T-cell (primary cell): ENCODE measurements at regions of chr5 and their contacts with region 1.

Region 1: DNA sequence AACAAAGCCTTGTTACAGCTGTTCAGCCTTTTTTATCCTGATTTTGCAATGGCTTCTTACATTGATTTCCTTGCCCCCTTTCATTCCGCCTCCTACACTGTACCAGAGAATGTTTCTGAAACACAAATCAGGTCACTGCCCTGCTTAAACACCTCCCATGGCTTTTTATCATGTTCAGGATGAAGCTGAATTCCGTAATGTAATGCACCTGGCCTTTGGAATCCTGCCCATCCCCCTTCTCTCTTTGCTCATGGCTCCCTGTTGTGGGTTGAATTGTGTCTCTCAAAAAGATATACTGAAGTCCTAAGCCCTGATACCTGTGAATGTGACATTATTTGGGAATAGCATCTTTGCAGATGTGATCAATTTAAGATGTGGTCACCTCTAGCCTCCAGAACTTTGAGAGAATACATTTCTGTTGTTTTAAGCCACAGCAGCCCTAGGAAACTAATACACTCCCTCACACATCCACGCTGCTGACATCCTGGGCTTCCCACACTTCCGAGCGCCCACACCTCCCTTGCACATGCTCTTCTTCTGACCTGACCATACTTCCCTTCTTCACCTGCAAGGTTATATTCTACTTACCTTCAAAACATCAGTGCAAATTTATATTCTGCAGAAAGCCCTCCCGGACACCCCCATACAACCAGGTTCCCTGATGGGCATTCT is 101.2 kb downstream of the DNAH5 start:
- DNase-seq: no peak
- ATAC-seq: no peak
- H3K4me3 ChIP-seq: no peak overlapping the region
- H3K4me3 Mint-ChIP-seq: no peak overlapping the region
- H3K27ac ChIP-seq: no peak overlapping the region
- H3K27ac Mint-ChIP-seq: no peak overlapping the region
- H3K4me1 ChIP-seq: no peaks in the 10 kb centered on the region
- H3K4me1 Mint-ChIP-seq: no peaks in the 10 kb centered on the region
- H3K27me3 ChIP-seq: no peaks in the 10 kb centered on the region
- H3K27me3 Mint-ChIP-seq: no peaks in the 10 kb centered on the region

Region 2: DNA sequence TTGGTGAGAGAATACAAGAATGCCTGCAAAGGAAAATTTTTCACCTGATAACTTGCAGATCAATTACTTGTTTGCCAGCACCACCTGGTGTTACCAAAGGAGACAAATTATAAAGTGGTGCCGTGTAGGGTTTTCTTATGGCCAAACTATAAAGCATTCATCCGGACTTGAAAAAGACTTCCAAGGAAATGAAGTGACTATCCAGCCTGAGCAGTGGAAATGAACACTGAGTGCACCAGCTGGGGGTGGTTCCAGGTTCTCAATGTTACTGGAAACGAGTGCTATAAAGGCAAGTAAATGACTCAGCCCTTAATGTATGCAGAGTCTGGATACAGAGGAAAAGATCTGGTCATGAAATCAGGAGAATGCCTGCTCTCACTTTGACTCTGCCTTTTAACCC is 12.0 kb before region 1 on chr5:
- CTCF ChIA-PET with region 1: no interaction called
- POLR2A ChIA-PET with region 1: no interaction called
- DNase-seq: no peak
- ATAC-seq: no peak
- H3K4me3 ChIP-seq: no peak overlapping the region
- H3K4me3 Mint-ChIP-seq: no peak overlapping the region
- H3K27ac ChIP-seq: no peak overlapping the region
- H3K27ac Mint-ChIP-seq: no peak overlapping the region
- H3K4me1 ChIP-seq: no peaks in the 10 kb centered on the region
- H3K4me1 Mint-ChIP-seq: no peaks in the 10 kb centered on the region
- H3K27me3 ChIP-seq: no peaks in the 10 kb centered on the region
- H3K27me3 Mint-ChIP-seq: no peaks in the 10 kb centered on the region

Region 3: GRCh38 chr5:13866792-13867191 is 23.5 kb after region 1 on chr5:
- CTCF ChIA-PET with region 1: no interaction called
- POLR2A ChIA-PET with region 1: no interaction called
- DNase-seq: no peak
- ATAC-seq: no peak
- H3K4me3 ChIP-seq: no peak overlapping the region
- H3K4me3 Mint-ChIP-seq: no peak overlapping the region
- H3K27ac ChIP-seq: no peak overlapping the region
- H3K27ac Mint-ChIP-seq: no peak overlapping the region
- H3K4me1 ChIP-seq: no peaks in the 10 kb centered on the region
- H3K4me1 Mint-ChIP-seq: no peaks in the 10 kb centered on the region
- H3K27me3 ChIP-seq: no peaks in the 10 kb centered on the region
- H3K27me3 Mint-ChIP-seq: no peaks in the 10 kb centered on the region

Region 4: GRCh38 chr5:13878357-13878756 is 35.0 kb after region 1 on chr5:
- CTCF ChIA-PET with region 1: interaction called in 1 of 2 experiments, 14 read pairs
- POLR2A ChIA-PET with region 1: no interaction called
- DNase-seq: no peak
- ATAC-seq: no peak
- H3K4me3 ChIP-seq: no peak overlapping the region
- H3K4me3 Mint-ChIP-seq: no peak overlapping the region
- H3K27ac ChIP-seq: no peak overlapping the region
- H3K27ac Mint-ChIP-seq: no peak overlapping the region
- H3K4me1 ChIP-seq: no peaks in the 10 kb centered on the region
- H3K4me1 Mint-ChIP-seq: no peaks in the 10 kb centered on the region
- H3K27me3 ChIP-seq: no peaks in the 10 kb centered on the region
- H3K27me3 Mint-ChIP-seq: no peaks in the 10 kb centered on the region